Caco-2 (cell line): ENCODE measurements at regions of chr1 and their contacts with region 1.

Region 1: DNA sequence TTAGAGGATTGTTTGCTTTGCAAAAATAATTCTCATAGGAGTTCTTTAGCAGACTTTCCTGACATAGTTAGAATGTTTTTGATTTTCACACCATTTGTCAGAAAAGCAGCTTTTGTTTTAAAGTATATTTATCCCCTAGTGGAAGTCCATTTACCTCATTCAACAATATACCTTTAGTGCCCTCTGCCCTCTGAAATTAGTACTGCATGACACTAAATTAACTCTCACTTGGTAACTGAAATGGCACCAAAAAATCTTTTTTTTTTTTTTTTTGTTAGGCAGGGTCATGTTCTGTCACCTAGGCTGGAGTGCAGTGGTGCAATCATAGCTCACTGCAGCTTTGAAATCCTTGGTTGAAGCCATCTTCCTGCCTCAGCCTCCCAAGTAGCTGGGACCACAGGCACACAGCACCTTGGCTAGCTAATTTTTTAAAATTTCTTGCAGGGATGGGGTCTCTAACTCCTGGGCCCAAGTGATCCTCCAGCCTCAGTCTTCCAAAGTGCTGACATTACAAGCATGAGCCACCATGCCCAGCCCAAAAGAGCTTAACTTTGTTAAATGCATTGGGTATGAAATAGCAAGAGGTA is 13.6 kb downstream of the LRRC42 start:
- DNase-seq: no peak
- H3K4me3 ChIP-seq: no peak overlapping the region
- H3K4me3 Mint-ChIP-seq: no peak overlapping the region
- H3K27ac Mint-ChIP-seq: no peak overlapping the region
- H3K4me1 ChIP-seq: peaks cover 27% of the 10 kb centered on the region
- H3K4me1 Mint-ChIP-seq: peaks cover 20% of the 10 kb centered on the region
- H3K27me3 ChIP-seq: no peaks in the 10 kb centered on the region
- H3K27me3 Mint-ChIP-seq: no peaks in the 10 kb centered on the region
- CTCF ChIP-seq: peak; percentile 35 to 57

Region 2: GRCh38 chr1:53393325-53393792 is 566.4 kb before region 1 on chr1:
- CTCF ChIA-PET with region 1: no interaction called
- POLR2A ChIA-PET with region 1: no interaction called
- intact Hi-C with region 1: no loop called
- DNase-seq: peak; percentile 56 to 82
- H3K4me3 ChIP-seq: no peak overlapping the region
- H3K4me3 Mint-ChIP-seq: no peak overlapping the region
- H3K27ac Mint-ChIP-seq: no peak overlapping the region
- H3K4me1 ChIP-seq: no peaks in the 10 kb centered on the region
- H3K4me1 Mint-ChIP-seq: no peaks in the 10 kb centered on the region
- H3K27me3 ChIP-seq: no peaks in the 10 kb centered on the region
- H3K27me3 Mint-ChIP-seq: peaks cover 5% of the 10 kb centered on the region
- CTCF ChIP-seq: peak; percentile 71 to 74

Region 3: DNA sequence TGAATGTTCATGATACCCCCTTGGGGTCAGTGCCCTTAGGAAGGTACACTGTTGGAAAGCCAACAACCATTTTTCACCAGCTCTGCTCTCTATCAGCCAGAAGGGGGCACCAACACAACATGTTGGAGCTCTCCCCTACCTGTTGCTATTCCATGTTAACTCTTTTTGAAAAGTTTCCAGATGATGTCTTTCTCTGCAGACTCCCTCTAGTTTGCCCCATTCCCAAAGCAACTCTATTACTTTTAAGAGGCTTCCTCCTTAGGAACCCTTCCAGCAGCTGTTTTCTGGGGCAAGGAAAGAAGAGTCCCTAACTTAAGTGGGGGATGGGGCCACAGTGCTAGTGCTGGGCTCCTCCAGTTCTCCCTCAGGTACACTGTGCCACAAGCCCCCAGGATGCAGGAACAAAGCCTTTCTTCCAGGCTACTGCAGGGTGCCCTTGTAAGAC is 98.8 kb before region 1 on chr1:
- CTCF ChIA-PET with region 1: interaction called, 15 read pairs
- POLR2A ChIA-PET with region 1: no interaction called
- intact Hi-C with region 1: no loop called
- DNase-seq: peak; percentile 41 to 55
- H3K4me3 ChIP-seq: no peak overlapping the region
- H3K4me3 Mint-ChIP-seq: peak overlapping the region; percentile 38
- H3K27ac Mint-ChIP-seq: no peak overlapping the region
- H3K4me1 ChIP-seq: no peaks in the 10 kb centered on the region
- H3K4me1 Mint-ChIP-seq: no peaks in the 10 kb centered on the region
- H3K27me3 ChIP-seq: no peaks in the 10 kb centered on the region
- H3K27me3 Mint-ChIP-seq: no peaks in the 10 kb centered on the region
- CTCF ChIP-seq: peak; percentile 60 to 71

Region 4: DNA sequence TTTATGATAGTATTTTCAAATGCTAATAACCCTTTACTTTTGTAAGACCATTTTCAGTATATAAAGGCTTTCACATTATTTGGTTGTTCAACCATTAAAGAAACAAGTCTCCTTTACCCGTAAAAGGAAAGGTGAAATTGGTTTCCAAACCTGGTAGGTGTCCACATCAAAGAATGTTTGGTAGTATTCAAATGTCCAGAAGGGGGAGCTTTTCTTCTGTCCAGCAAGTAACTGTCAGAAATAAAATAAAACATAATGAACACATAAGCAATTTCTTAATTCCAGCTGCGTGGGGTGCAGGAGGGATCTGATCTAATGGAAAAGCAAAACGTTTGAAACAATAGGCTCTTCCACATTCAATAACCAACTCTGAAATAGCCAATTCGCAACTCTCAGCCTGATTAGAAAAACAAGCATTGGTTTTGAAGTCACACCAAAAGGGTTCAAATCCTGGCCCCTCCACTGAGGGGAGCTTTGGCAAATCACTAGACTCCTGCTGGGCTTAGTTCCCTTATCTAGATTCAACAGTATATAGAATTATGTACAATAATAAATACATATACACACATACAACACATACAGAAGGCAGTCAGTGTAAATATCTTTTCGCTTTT is 81.2 kb before region 1 on chr1:
- CTCF ChIA-PET with region 1: interaction called, 14 read pairs
- POLR2A ChIA-PET with region 1: no interaction called
- intact Hi-C with region 1: no loop called
- DNase-seq: peak in 1 of 2 experiments; percentile 49
- H3K4me3 ChIP-seq: no peak overlapping the region
- H3K4me3 Mint-ChIP-seq: no peak overlapping the region
- H3K27ac Mint-ChIP-seq: no peak overlapping the region
- H3K4me1 ChIP-seq: no peaks in the 10 kb centered on the region
- H3K4me1 Mint-ChIP-seq: no peaks in the 10 kb centered on the region
- H3K27me3 ChIP-seq: no peaks in the 10 kb centered on the region
- H3K27me3 Mint-ChIP-seq: no peaks in the 10 kb centered on the region
- CTCF ChIP-seq: peak; percentile 41 to 44

Region 5: GRCh38 chr1:53889304-53890298 is 70.2 kb before region 1 on chr1 and contains the start of gene YIPF1:
- CTCF ChIA-PET with region 1: no interaction called
- POLR2A ChIA-PET with region 1: no interaction called
- intact Hi-C with region 1: no loop called
- DNase-seq: peak; percentile 83 to 85
- H3K4me3 ChIP-seq: peak within 1 kb of the TSS; percentile 69
- H3K4me3 Mint-ChIP-seq: peak within 1 kb of the TSS; percentile 93
- H3K27ac Mint-ChIP-seq: peak within 1 kb of the TSS; percentile 89
- H3K4me1 ChIP-seq: peaks cover 20% of the 10 kb centered on the region
- H3K4me1 Mint-ChIP-seq: peaks cover 9% of the 10 kb centered on the region
- H3K27me3 ChIP-seq: no peaks in the 10 kb centered on the region
- H3K27me3 Mint-ChIP-seq: no peaks in the 10 kb centered on the region
- CTCF ChIP-seq: no peak
- total RNA-seq, gene YIPF1: 16.6 and 17.2 TPM in 2 replicates

Region 6: DNA sequence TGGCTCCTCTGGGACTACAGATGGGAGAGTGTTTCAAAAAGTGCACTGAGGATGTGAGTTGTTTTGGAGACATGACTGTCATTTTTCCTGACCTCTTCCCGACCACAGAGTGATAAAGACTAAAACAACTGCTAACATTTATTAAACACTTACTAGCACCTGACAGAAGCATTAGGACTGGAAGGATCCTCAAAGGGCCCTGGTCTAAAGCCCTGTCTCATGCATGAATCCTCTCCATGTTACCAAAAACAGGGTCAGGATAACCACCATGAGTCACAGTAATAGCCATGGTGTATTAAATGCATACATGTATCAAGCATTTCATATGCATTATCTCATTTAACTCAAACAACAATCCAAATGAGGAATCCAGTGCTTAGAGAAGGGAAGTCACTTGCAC is 228.5 kb after region 1 on chr1:
- CTCF ChIA-PET with region 1: no interaction called
- POLR2A ChIA-PET with region 1: no interaction called
- intact Hi-C with region 1: no loop called
- DNase-seq: no peak
- H3K4me3 ChIP-seq: no peak overlapping the region
- H3K4me3 Mint-ChIP-seq: no peak overlapping the region
- H3K27ac Mint-ChIP-seq: no peak overlapping the region
- H3K4me1 ChIP-seq: no peaks in the 10 kb centered on the region
- H3K4me1 Mint-ChIP-seq: no peaks in the 10 kb centered on the region
- H3K27me3 ChIP-seq: no peaks in the 10 kb centered on the region
- H3K27me3 Mint-ChIP-seq: no peaks in the 10 kb centered on the region
- CTCF ChIP-seq: no peak